Heart right ventricle (tissue), 16 donors: ENCODE measurements at regions of chr10 and their contacts with region 1.

Region 1: GRCh38 chr10:51063659-51064535 is 10.4 kb upstream of the PRKG1 start:
- DNase-seq: no peak
- ATAC-seq: peak in 5 of 8 donors; percentile 47 to 69 (median 55)
- H3K4me3 ChIP-seq: no peak overlapping the region
- H3K27ac ChIP-seq: no peak overlapping the region
- H3K4me1 ChIP-seq: peaks cover 0 to 19% (median 3%) of the 10 kb centered on the region in 9 donors
- H3K27me3 ChIP-seq: no peaks in the 10 kb centered on the region
- CTCF ChIP-seq: peak in 8 of 9 donors; percentile 41 to 74 (median 66)

Region 2: GRCh38 chr10:50988792-50989191 is 75.1 kb before region 1 on chr10:
- intact Hi-C with region 1: no loop called
- DNase-seq: no peak
- ATAC-seq: no peak
- H3K4me3 ChIP-seq: peak overlapping the region in 7 of 10 donors; percentile 9 to 79 (median 71)
- H3K27ac ChIP-seq: peak overlapping the region in 7 of 10 donors; percentile 5 to 94 (median 41)
- H3K4me1 ChIP-seq: peaks cover 0 to 20% (median 6%) of the 10 kb centered on the region in 9 donors
- H3K27me3 ChIP-seq: peaks cover 0 to 39% (median 0%) of the 10 kb centered on the region in 7 donors
- CTCF ChIP-seq: peak in 8 of 9 donors; percentile 15 to 63 (median 46)

Region 3: DNA sequence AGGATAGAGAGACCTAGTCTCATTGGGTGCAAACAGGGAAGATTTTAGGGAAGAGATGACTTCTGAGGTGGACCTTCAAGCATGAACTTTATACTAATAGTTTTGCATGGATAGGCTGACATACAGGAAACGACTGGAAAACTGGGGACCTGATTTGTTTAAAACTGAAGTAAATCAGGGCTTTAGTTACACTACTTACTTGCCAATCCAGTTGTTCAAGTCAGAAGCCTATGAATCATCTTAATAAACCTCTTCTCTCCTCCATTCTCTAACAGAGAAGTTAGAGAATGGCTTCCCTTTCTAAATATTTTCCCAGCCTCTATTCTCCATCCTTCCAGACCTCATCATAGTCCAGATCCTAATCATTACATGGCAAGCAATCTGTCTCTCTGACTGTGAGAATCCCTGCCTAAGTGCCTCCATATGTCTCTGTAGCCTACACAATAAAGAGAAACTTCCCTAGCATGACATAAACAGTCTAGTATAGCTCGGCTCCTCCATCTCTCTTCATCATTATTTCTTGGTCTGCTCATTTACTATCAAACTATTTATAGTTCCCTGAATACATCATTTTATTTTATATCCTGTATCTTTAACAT is 66.1 kb after region 1 on chr10:
- intact Hi-C with region 1: no loop called
- DNase-seq: no peak
- ATAC-seq: no peak
- H3K4me3 ChIP-seq: no peak overlapping the region
- H3K27ac ChIP-seq: no peak overlapping the region
- H3K4me1 ChIP-seq: no peaks in the 10 kb centered on the region
- H3K27me3 ChIP-seq: no peaks in the 10 kb centered on the region
- CTCF ChIP-seq: no peak

Region 4: GRCh38 chr10:51422311-51423120 is 358.6 kb after region 1 on chr10:
- intact Hi-C with region 1: loop called in 2 of 10 experiments (anchors 2 to 10 kb)
- DNase-seq: peak; percentile 24 to 75
- ATAC-seq: peak; percentile 53 to 82 (median 66)
- H3K4me3 ChIP-seq: peak overlapping the region in 1 of 10 donors; percentile 8
- H3K27ac ChIP-seq: peak overlapping the region; percentile 19 to 87 (median 72)
- H3K4me1 ChIP-seq: peaks cover 0 to 52% (median 20%) of the 10 kb centered on the region in 9 donors
- H3K27me3 ChIP-seq: no peaks in the 10 kb centered on the region
- CTCF ChIP-seq: peak; percentile 61 to 81 (median 75)

Region 5: DNA sequence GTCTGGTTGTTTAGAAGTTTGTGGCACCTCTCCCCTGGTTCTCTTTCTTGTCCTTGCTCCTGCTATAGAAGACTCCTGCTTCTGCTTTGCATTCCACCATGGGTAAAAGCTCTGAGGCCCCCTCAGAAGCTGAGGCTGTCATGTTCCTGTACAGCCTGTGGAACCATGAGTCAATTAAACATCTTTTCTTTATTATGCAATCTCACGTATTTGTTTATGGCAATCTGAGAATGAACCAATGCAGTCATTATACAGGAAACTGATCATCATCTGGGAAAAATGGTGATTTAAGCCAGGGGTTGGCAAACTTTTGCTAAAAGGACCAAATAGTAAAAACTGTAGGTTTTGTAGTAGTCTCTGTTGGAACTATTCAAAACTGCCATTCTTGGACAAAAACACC is 460.1 kb after region 1 on chr10:
- intact Hi-C with region 1: loop called in 1 of 10 experiments (anchors 10 kb)
- DNase-seq: no peak
- ATAC-seq: no peak
- H3K4me3 ChIP-seq: no peak overlapping the region
- H3K27ac ChIP-seq: no peak overlapping the region
- H3K4me1 ChIP-seq: peaks cover 0 to 27% (median 7%) of the 10 kb centered on the region in 9 donors
- H3K27me3 ChIP-seq: no peaks in the 10 kb centered on the region
- CTCF ChIP-seq: no peak

Region 6: DNA sequence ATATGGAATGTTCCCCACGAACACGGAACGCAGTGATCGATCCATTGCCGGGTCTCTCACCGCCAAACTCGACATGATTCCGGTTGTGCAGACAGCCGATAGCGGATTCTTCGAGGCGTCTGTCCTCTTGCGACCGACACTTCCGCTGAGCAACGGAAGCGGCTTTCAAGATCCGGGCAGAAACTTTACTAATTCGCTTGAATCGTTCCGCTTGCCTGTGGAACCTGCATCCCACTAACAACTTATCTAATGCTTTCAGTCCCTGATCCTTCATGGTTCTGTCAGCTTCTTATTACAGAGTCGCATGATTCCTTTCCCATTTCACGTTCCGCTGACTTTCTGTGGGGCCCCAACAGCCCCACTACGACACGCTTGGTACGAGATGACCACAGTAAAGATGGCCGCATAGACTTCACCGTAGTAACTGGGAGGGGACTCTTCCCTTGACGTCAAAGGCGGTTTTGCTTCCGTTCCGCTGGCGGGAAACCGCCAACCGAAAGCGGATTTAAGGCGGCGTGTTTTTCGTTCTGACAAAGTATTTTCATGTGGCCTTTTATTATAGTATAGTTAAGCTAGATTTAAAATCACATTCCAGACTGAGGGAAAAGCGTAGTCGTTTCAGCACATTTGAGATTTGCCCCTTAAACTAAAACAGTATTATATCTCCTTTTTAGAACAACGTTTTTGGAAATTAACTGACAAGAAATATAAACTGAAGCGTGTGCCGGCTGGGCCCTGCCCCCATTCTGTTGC is 635.8 kb after region 1 on chr10 and contains the start of gene CSTF2T:
- intact Hi-C with region 1: loop called in 1 of 10 experiments (anchors 10 kb)
- DNase-seq: peak; percentile 79 to 94
- ATAC-seq: peak; percentile 96 to 99 (median 97)
- H3K4me3 ChIP-seq: peak within 1 kb of the TSS; percentile 62 to 84 (median 72)
- H3K27ac ChIP-seq: peak within 1 kb of the TSS; percentile 88 to 99 (median 94)
- H3K4me1 ChIP-seq: peaks cover 2 to 53% (median 43%) of the 10 kb centered on the region in 9 donors
- H3K27me3 ChIP-seq: no peaks in the 10 kb centered on the region
- CTCF ChIP-seq: no peak
- total RNA-seq, gene CSTF2T: 20.6 to 31.6 (median 23.1) TPM

Region 7: DNA sequence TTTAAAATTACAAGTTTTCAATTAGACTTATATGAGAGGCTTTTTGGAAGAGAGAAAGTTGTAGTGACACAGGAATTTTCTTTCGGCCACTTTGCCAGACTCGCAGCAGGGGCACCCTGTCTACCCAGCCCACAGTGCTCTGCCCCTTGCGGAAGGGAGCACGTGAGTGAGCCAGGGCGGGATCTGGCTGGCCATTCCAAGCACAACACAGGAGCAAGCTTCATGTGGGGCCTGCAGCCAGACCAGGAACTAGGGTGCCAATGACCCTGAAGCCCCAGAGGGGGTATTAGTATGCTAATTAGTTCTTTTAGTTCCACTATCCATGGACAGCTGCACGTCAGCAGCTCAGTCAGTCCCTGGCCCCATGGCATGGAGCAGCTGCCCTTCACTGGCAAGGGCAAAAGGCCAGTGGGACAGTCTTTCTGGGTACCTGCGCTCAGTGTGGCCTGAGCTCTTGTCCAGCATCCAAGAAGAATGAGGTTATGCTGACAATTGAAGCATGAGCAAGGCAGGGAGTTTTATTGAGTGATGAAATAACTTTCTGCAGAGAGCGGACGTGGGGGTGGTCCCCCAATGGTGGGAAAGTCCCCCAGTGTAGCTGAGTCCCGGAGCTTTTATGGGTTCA is 886.6 kb after region 1 on chr10:
- intact Hi-C with region 1: loop called in 3 of 10 experiments (anchors 5 to 10 kb)
- DNase-seq: peak in 1 of 2 donors; percentile 10
- ATAC-seq: peak in 7 of 8 donors; percentile 19 to 73 (median 47)
- H3K4me3 ChIP-seq: no peak overlapping the region
- H3K27ac ChIP-seq: peak overlapping the region in 5 of 10 donors; percentile 4 to 36 (median 19)
- H3K4me1 ChIP-seq: peaks cover 0 to 32% (median 12%) of the 10 kb centered on the region in 9 donors
- H3K27me3 ChIP-seq: no peaks in the 10 kb centered on the region
- CTCF ChIP-seq: no peak

Region 8: GRCh38 chr10:51960494-51960895 is 896.6 kb after region 1 on chr10:
- intact Hi-C with region 1: loop called in 5 of 10 experiments (anchors 5 to 10 kb)
- DNase-seq: peak in 1 of 2 donors; percentile 15
- ATAC-seq: peak in 7 of 8 donors; percentile 39 to 69 (median 59)
- H3K4me3 ChIP-seq: no peak overlapping the region
- H3K27ac ChIP-seq: no peak overlapping the region
- H3K4me1 ChIP-seq: peaks cover 0 to 24% (median 4%) of the 10 kb centered on the region in 9 donors
- H3K27me3 ChIP-seq: no peaks in the 10 kb centered on the region
- CTCF ChIP-seq: peak; percentile 17 to 69 (median 51)

Region 9: DNA sequence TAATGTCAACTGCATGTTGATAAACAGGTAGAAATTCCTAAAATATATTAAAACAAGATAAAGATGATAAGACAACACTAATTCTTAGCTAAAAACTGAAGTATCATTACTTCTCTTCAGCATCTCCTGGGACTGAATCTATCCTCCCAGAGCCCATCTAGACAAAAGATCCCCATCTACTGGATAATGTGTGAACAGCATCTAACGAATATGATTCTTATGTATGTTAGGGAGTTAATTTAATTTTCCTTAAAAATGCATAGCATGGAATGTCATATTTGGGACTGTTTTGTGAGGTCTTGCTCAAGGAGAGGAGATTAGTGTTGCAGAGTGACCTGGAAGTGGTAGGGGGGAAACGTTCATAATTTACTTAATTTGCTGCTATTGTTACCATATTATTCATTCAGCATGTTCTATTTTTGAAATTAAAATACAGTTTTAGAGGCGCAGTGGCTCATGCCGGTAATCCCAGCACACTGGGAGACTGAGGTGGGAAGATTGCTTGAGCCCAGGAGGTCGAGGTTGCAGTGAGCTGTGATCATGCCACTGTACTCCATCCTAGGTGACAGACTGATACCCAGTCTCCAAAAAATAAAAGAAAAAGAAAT is 940.5 kb after region 1 on chr10:
- intact Hi-C with region 1: loop called in 2 of 10 experiments (anchors 5 kb)
- DNase-seq: no peak
- ATAC-seq: peak in 2 of 8 donors; percentile 34 to 48
- H3K4me3 ChIP-seq: no peak overlapping the region
- H3K27ac ChIP-seq: no peak overlapping the region
- H3K4me1 ChIP-seq: peaks cover 0 to 11% (median 0%) of the 10 kb centered on the region in 9 donors
- H3K27me3 ChIP-seq: no peaks in the 10 kb centered on the region
- CTCF ChIP-seq: peak in 8 of 9 donors; percentile 28 to 72 (median 57)